Ovary (tissue), 10 donors: ENCODE measurements at regions of chr11 and their contacts with region 1.

Region 1: GRCh38 chr11:8964324-8965320 is at the start of gene TMEM9B:
- DNase-seq: peak; percentile 85 to 92 (median 87)
- H3K4me3 ChIP-seq: peak within 1 kb of the TSS; percentile 88
- H3K27ac ChIP-seq: peak within 1 kb of the TSS; percentile 58 to 83
- H3K4me1 ChIP-seq: peaks cover 5% of the 10 kb centered on the region
- H3K27me3 ChIP-seq: no peaks in the 10 kb centered on the region
- CTCF ChIP-seq: no peak
- EP300 ChIP-seq: no peak
- POLR2A ChIP-seq: peak; percentile 86
- total RNA-seq, gene TMEM9B: 20.3 to 38.8 (median 29.2) TPM

Region 2: DNA sequence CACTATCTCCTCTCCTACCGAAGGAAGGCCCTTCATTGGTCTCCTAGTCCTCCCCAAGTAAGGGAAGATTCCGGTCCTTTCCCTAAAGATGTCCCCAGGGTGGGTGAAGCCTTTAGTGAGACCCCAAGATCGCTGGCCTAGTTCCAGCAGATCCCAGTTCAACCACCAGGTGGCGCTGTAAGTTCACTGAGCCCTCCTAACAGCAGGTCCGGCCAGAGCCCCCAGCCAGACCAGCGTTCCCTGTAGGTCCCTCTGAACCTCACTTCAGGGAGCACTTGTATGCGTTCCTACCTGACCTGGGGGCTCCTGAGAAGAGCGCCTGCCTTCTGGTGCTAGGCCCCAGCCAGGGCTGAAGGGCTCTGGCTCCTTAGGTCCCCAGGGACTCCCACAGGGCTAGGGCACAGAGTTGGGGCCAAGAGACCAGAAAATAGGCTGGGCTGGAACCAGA is 739.0 kb before region 1 on chr11:
- intact Hi-C with region 1: loop called in 1 of 4 experiments (anchors 10 kb)
- DNase-seq: peak; percentile 67 to 88 (median 80)
- H3K4me3 ChIP-seq: no peak overlapping the region
- H3K27ac ChIP-seq: no peak overlapping the region
- H3K4me1 ChIP-seq: no peaks in the 10 kb centered on the region
- H3K27me3 ChIP-seq: no peaks in the 10 kb centered on the region
- CTCF ChIP-seq: peak; percentile 91 to 93 (median 91)
- EP300 ChIP-seq: no peak
- POLR2A ChIP-seq: no peak

Region 3: DNA sequence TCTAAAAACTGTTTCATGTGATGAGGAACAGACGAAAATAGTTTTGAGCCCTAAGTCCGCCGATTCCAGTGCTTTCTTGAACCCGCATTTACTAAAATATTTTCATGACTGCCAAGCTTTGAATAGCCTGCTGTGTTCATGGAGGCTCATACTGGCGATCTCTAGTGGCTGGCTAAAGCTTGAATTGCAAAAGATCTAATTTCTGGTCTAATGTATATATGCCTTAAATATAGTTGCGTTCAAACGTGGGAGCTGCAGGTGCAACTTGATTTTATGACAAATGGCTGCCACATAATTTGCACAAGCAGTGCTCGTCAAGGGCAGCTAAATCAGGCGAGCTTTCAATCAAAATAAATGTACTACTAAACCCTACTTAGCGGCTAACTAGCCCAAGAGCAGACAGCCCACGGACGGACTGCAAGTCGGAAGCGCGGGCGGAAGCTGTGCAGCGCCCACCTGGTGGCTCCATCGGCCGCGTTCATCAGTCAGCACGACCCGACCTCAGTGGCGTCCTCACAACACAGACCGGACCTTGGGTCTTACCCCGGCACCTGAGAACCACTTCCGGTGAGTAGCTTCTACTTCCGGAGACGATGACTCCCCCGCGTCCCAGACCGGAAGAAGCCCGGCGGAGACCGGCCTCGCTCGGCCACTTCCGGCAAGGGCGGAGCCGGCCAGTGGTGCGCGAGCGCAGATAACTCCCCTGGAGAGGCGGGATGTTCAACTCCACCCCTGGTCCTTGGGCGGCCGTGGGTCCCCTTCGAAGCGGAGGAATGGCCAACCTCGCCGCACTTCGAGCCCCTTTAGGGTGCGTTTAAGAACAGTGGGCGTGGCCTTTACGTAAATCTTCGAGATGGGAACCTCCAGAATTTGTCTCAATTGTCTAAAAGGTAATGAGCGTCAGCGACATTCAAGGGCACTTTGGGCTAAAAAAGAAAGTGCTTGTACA is 275.9 kb before region 1 on chr11:
- intact Hi-C with region 1: loop called in 2 of 4 experiments (anchors 5 to 10 kb)
- DNase-seq: peak; percentile 94 to 97 (median 94)
- H3K4me3 ChIP-seq: peak overlapping the region; percentile 40
- H3K27ac ChIP-seq: peak overlapping the region in 1 of 2 donors; percentile 20
- H3K4me1 ChIP-seq: peaks cover 7% of the 10 kb centered on the region
- H3K27me3 ChIP-seq: no peaks in the 10 kb centered on the region
- CTCF ChIP-seq: peak in 1 of 3 donors; percentile 27
- EP300 ChIP-seq: no peak
- POLR2A ChIP-seq: no peak

Region 4: DNA sequence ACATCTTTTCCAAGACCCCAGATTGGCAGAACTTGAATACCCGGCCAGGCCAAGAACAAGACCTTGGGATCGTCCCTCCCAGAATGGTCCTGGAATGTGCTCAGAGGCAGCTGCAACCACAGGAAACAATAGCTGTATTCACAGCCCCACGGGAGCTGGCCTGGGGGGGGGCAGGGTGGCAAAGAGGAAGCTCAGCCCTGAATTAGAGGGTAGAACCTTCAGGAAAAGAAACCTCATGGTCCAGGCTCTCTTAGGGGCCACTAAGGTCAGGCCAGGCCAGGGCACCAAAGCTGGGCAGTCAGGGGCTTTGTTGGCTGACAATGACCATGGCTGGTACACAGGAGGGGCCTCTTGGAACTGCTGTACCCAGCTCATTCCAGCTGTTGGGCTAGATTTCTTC is 264.7 kb before region 1 on chr11:
- intact Hi-C with region 1: loop called in 1 of 4 experiments (anchors 10 kb)
- DNase-seq: peak in 1 of 5 donors; percentile 23
- H3K4me3 ChIP-seq: no peak overlapping the region
- H3K27ac ChIP-seq: no peak overlapping the region
- H3K4me1 ChIP-seq: peaks cover 4% of the 10 kb centered on the region
- H3K27me3 ChIP-seq: no peaks in the 10 kb centered on the region
- CTCF ChIP-seq: no peak
- EP300 ChIP-seq: no peak
- POLR2A ChIP-seq: no peak

Region 5: DNA sequence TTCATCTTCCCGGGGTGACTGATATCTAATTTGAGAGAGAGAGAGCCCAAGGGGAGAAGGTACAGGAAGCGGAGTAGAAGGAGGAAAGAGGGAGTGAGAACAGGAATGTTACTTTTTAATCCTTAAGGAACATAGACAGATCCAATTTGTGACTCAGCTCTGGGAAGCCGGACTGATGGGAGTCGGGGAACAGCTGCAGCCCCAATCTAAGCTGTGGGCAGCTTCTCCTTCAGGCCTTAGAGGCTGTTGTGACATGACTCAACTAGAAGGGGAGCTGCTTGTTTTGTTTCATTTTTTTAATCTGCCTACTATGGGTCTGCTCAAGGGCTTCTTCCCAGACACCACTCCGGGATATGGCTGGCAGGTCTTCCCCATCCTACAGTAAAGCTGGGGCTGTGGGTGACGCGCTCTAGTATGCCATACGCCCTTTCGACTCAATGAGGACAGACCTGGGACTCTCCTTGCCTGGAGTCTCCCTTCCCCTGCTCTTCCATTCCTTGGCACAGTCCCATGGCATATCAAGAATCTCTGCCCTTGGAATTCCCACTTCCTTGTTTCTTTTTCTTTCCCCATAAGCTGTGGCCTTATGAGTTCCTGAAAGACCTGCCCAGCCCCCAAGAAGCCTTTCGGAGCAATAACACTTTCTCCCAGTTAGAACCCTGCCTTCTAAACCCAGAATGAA is 156.9 kb before region 1 on chr11:
- intact Hi-C with region 1: loop called in 1 of 4 experiments (anchors 5 kb)
- DNase-seq: peak; percentile 53 to 77 (median 68)
- H3K4me3 ChIP-seq: peak overlapping the region; percentile 76
- H3K27ac ChIP-seq: peak overlapping the region; percentile 70 to 86
- H3K4me1 ChIP-seq: peaks cover 30% of the 10 kb centered on the region
- H3K27me3 ChIP-seq: no peaks in the 10 kb centered on the region
- CTCF ChIP-seq: no peak
- EP300 ChIP-seq: no peak
- POLR2A ChIP-seq: peak; percentile 29

Region 6: DNA sequence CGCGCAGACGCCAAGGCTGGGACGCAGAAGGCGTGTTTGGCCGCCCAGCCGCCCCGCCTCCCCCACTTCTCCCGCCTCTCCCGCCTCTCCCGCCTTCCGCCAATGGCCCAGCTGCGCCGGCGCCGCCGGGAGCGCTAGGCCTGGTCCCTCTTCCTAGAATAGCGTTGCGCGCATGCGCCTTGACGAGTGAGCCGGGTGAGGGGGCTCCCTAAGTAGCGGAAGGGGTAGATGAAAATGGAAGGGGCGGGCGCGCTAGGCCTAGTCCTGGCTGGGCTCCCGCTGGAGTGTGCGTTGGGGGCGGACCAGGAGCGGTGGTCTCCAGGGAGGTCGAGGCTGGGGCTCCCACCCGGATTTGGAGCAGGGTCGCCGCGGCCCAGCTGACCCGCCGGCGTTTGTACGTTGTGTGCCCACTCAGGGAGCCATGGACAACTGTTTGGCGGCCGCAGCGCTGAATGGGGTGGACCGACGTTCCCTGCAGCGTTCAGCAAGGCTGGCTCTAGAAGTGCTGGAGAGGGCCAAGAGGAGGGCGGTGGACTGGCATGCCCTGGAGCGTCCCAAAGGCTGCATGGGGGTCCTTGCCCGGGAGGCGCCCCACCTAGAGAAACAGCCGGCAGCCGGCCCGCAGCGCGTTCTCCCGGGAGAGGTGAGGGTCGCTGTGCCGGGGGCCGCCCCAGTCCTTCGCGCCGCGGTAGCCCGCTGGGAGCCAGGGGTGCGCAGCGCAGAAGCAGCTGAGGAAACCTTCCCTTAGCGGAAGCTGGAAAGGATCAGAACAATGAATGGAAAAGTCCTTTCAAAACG is 53.4 kb before region 1 on chr11 and contains the start of gene AKIP1:
- intact Hi-C with region 1: loop called in 2 of 4 experiments (anchors 2 to 5 kb)
- DNase-seq: peak; percentile 97 to 98 (median 98)
- H3K4me3 ChIP-seq: peak within 1 kb of the TSS; percentile 83
- H3K27ac ChIP-seq: peak within 1 kb of the TSS; percentile 78 to 82
- H3K4me1 ChIP-seq: peaks cover 6% of the 10 kb centered on the region
- H3K27me3 ChIP-seq: no peaks in the 10 kb centered on the region
- CTCF ChIP-seq: no peak
- EP300 ChIP-seq: no peak
- POLR2A ChIP-seq: peak; percentile 57
- total RNA-seq, gene AKIP1: 12.4 to 26.2 (median 18.8) TPM

Region 7: GRCh38 chr11:8917157-8917825 is 47.3 kb before region 1 on chr11:
- intact Hi-C with region 1: loop called in 1 of 4 experiments (anchors 5 kb)
- DNase-seq: peak in 3 of 5 donors; percentile 35 to 78 (median 61)
- H3K4me3 ChIP-seq: no peak overlapping the region
- H3K27ac ChIP-seq: no peak overlapping the region
- H3K4me1 ChIP-seq: peaks cover 9% of the 10 kb centered on the region
- H3K27me3 ChIP-seq: no peaks in the 10 kb centered on the region
- CTCF ChIP-seq: no peak
- EP300 ChIP-seq: no peak
- POLR2A ChIP-seq: no peak

Region 8: GRCh38 chr11:9498457-9499078 is 533.9 kb after region 1 on chr11:
- intact Hi-C with region 1: no loop called
- DNase-seq: no peak
- H3K4me3 ChIP-seq: no peak overlapping the region
- H3K27ac ChIP-seq: no peak overlapping the region
- H3K4me1 ChIP-seq: no peaks in the 10 kb centered on the region
- H3K27me3 ChIP-seq: no peaks in the 10 kb centered on the region
- CTCF ChIP-seq: no peak
- EP300 ChIP-seq: no peak
- POLR2A ChIP-seq: no peak